Activated T-helper 2 cell treated with anti-CD3 and anti-CD28 coated beads, Interferon-gamma antibody, Interleukin-2, Interleukin-4, amounts not matched to agents 10 μg/mL and 5 μg/mL and 100 μg/mL, durations not matched to agents 14 hours and 24 hours and 36 hours (primary cell): ENCODE measurements at regions of chr22 and their contacts with region 1.

Region 1: GRCh38 chr22:28810821-28811491 is 10.6 kb upstream of the XBP1 start:
- DNase-seq: peak; percentile 50
- H3K4me3 Mint-ChIP-seq: peak overlapping the region; percentile 59
- H3K27ac Mint-ChIP-seq: peak overlapping the region; percentile 82
- H3K4me1 Mint-ChIP-seq: peaks cover 69% of the 10 kb centered on the region
- H3K27me3 Mint-ChIP-seq: no peaks in the 10 kb centered on the region

Region 2: DNA sequence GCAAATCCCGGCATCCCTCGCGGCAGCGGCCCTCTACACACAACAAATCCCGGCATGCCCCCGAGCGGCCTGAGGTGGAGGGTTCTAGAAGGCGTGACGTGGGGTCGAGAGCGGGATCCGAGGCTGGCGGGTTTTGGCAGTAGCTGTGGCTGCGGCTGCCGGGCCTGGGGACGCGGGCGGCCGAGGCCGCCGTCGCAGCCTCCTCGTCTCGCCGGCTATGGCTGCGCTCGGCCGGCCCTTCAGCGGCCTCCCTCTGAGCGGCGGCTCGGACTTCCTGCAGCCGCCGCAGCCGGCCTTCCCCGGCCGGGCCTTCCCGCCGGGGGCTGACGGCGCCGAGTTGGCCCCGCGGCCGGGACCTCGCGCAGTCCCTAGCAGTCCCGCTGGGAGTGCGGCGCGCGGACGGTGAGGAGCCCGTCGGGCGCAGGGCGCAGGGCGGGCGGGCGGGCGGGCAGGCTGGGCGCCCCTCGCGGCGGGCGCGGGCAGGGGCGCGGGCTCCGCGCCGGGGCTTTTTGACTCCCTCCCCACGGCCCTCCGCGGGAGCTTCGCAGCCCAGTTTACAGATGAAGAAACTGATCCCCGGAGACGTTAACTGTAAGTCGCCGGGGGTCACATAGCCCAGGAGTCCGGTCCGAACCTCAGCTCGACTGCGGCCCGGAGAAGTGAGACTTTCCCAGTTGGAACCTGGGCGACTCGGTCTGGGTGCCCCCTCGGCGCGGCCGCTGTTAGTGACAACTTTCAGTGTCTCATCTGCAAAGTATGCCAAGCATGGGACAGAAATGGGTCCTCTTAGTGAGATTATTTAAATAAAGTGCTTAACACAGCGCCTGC is 38.1 kb before region 1 on chr22 and contains the start of gene CCDC117:
- intact Hi-C with region 1: loop called (anchors 2 kb)
- DNase-seq: peak; percentile 89
- H3K4me3 Mint-ChIP-seq: peak within 1 kb of the TSS; percentile 99
- H3K27ac Mint-ChIP-seq: peak within 1 kb of the TSS; percentile 100
- H3K4me1 Mint-ChIP-seq: peaks cover 19% of the 10 kb centered on the region
- H3K27me3 Mint-ChIP-seq: no peaks in the 10 kb centered on the region
- total RNA-seq, gene CCDC117: 33.9 and 38.6 TPM in 2 replicates

Region 3: DNA sequence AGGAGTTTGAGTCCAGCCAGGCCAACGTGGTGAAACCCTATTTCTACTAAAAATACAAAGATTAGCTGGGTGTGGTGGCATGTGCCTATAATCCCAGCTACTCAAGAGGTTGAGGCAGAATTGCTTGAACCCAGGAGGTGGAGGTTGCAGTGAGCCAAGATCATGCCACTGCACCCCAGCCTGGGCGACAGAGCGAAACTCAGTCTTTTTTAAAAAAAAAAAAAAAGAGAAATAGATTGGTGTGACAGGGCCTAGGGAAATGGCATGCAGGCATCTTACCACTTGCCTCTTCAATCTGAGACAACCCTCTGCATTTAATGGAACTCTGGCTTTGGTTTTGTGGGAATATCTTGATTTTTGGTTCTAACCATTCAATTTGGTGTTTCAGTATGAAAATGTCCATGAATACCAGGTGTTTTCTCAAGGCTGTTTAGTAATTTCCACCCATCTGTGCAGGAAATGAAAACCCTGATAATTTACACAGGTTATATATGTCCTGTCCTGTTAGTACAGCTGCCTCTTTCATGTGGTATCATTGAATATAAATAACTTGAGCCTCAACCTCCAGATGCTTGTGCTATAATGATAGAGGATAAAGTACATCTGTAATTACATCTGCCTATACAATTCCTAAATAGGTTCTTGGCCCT is 19.0 kb before region 1 on chr22:
- intact Hi-C with region 1: no loop called
- DNase-seq: no peak
- H3K4me3 Mint-ChIP-seq: no peak overlapping the region
- H3K27ac Mint-ChIP-seq: peak overlapping the region; percentile 36
- H3K4me1 Mint-ChIP-seq: peaks cover 49% of the 10 kb centered on the region
- H3K27me3 Mint-ChIP-seq: no peaks in the 10 kb centered on the region

Region 4: GRCh38 chr22:28951969-28952521 is 141.1 kb after region 1 on chr22:
- intact Hi-C with region 1: no loop called
- DNase-seq: no peak
- H3K4me3 Mint-ChIP-seq: no peak overlapping the region
- H3K27ac Mint-ChIP-seq: no peak overlapping the region
- H3K4me1 Mint-ChIP-seq: peaks cover 11% of the 10 kb centered on the region
- H3K27me3 Mint-ChIP-seq: peaks cover 79% of the 10 kb centered on the region